OCI-LY7 (cell line): ENCODE measurements at regions of chr9 and their contacts with region 1.

Region 1: GRCh38 chr9:15262581-15262980 is 44.4 kb downstream of the TTC39B start:
- DNase-seq: no peak
- H3K4me3 ChIP-seq: no peak overlapping the region
- H3K27ac ChIP-seq: no peak overlapping the region
- H3K4me1 ChIP-seq: no peaks in the 10 kb centered on the region
- CTCF ChIP-seq: no peak

Region 2: GRCh38 chr9:14652729-14653377 is 609.7 kb before region 1 on chr9:
- CTCF ChIA-PET with region 1: no interaction called
- POLR2A ChIA-PET with region 1: no interaction called
- intact Hi-C with region 1: no loop called
- DNase-seq: peak; percentile 6
- H3K4me3 ChIP-seq: no peak overlapping the region
- H3K27ac ChIP-seq: no peak overlapping the region
- H3K4me1 ChIP-seq: no peaks in the 10 kb centered on the region
- CTCF ChIP-seq: peak; percentile 77

Region 3: GRCh38 chr9:15231788-15232635 is 30.6 kb before region 1 on chr9:
- CTCF ChIA-PET with region 1: no interaction called
- POLR2A ChIA-PET with region 1: no interaction called
- intact Hi-C with region 1: no loop called
- DNase-seq: peak; percentile 43
- H3K4me3 ChIP-seq: no peak overlapping the region
- H3K27ac ChIP-seq: no peak overlapping the region
- H3K4me1 ChIP-seq: no peaks in the 10 kb centered on the region
- CTCF ChIP-seq: peak; percentile 88

Region 4: GRCh38 chr9:15317836-15318235 is 55.3 kb after region 1 on chr9:
- CTCF ChIA-PET with region 1: no interaction called
- POLR2A ChIA-PET with region 1: interaction called, 10 read pairs
- intact Hi-C with region 1: no loop called
- DNase-seq: no peak
- H3K4me3 ChIP-seq: no peak overlapping the region
- H3K27ac ChIP-seq: no peak overlapping the region
- H3K4me1 ChIP-seq: no peaks in the 10 kb centered on the region
- CTCF ChIP-seq: no peak